Calu3 (cell line): ENCODE measurements at regions of chr12 and their contacts with region 1.

Region 1: DNA sequence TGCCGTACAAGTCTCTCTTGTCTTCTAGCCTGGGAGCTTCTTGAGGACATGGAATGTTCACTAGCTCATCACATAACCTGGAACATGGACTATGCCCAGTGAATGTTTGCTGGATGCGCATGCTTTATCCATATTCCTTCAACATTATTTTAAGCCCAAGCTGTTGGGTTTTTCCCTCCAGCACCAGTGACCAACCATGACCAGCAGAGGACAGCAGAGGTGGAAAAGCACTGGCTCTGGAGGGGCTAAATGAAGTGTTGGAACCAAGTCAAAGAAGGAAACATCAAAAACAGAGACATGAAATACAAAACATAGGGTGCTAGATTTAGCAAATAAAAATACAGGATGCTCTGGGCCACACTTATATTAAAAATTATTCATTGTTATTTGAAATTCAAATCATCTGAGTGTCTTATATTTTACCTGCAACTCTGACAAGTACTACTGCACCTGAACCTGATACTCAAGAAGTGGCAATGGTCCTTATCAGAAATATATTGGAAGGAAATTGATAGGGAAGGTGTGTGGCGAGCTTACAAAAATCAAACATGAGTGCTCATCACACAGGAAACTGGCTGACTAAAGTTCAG is 23.1 kb upstream of the HELB start:
- DNase-seq: peak; percentile 51
- H3K4me3 Mint-ChIP-seq: no peak overlapping the region
- H3K27ac Mint-ChIP-seq: no peak overlapping the region
- H3K4me1 Mint-ChIP-seq: no peaks in the 10 kb centered on the region
- H3K27me3 Mint-ChIP-seq: peaks cover 15% of the 10 kb centered on the region
- CTCF ChIP-seq: peak; percentile 58

Region 2: DNA sequence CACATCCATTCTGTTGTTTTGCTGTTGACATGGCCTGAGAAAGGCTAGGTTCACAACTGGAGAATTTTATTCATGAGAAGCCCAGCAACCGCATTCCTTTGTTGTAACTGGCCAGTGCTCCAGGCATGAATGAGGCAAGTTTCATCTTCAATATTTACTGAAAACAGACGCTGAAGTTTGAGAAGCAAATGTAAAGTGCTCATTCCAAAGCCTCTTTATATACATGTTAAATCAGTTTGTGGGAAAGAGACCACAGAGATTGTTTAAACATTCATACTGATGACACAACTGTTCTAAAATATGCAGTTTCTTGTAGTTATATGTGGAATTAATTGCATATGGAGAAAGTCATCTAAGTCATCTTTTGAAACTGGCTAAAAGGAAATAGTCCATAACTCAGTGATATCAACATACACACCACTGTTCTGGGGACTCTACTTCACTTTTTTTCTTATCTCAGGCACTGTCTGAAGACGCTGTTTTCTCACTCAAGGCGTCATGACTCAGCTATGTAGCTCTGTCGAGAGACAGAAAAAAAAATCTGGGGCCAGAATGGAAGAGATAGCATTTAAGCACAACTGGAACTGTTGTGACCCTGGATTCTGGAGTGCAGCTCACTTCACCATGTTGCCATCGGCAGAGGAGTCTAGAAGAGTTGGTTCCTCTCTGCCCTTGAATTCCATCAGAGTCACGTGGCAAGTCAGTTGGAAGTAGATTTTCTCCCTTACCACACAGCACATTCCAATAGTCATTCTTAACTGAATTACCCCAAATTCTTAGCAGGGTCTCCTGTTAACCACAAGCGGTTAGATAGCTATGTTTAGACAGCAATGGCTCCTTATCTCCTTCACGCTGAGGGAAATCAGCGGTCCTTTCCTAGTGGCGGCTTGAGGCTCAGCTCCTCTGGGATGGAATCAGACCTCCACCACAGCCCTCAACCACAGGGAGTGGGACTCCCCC is 713.3 kb before region 1 on chr12:
- CTCF ChIA-PET with region 1: no interaction called
- intact Hi-C with region 1: no loop called
- DNase-seq: no peak
- H3K4me3 Mint-ChIP-seq: no peak overlapping the region
- H3K27ac Mint-ChIP-seq: no peak overlapping the region
- H3K4me1 Mint-ChIP-seq: peaks cover 27% of the 10 kb centered on the region
- H3K27me3 Mint-ChIP-seq: no peaks in the 10 kb centered on the region
- CTCF ChIP-seq: no peak

Region 3: GRCh38 chr12:66409195-66409871 is 130.1 kb after region 1 on chr12:
- CTCF ChIA-PET with region 1: no interaction called
- intact Hi-C with region 1: loop called (anchors 5 kb)
- DNase-seq: peak; percentile 53
- H3K4me3 Mint-ChIP-seq: no peak overlapping the region
- H3K27ac Mint-ChIP-seq: no peak overlapping the region
- H3K4me1 Mint-ChIP-seq: no peaks in the 10 kb centered on the region
- H3K27me3 Mint-ChIP-seq: no peaks in the 10 kb centered on the region
- CTCF ChIP-seq: peak; percentile 81

Region 4: GRCh38 chr12:66693901-66694675 is 414.9 kb after region 1 on chr12:
- CTCF ChIA-PET with region 1: interaction called, 4 read pairs
- intact Hi-C with region 1: loop called (anchors 2 kb)
- DNase-seq: peak; percentile 43
- H3K4me3 Mint-ChIP-seq: no peak overlapping the region
- H3K27ac Mint-ChIP-seq: no peak overlapping the region
- H3K4me1 Mint-ChIP-seq: peaks cover 9% of the 10 kb centered on the region
- H3K27me3 Mint-ChIP-seq: no peaks in the 10 kb centered on the region
- CTCF ChIP-seq: peak; percentile 72

Region 5: GRCh38 chr12:67077617-67078016 is 798.4 kb after region 1 on chr12:
- CTCF ChIA-PET with region 1: no interaction called
- intact Hi-C with region 1: no loop called
- DNase-seq: no peak
- H3K4me3 Mint-ChIP-seq: no peak overlapping the region
- H3K27ac Mint-ChIP-seq: no peak overlapping the region
- H3K4me1 Mint-ChIP-seq: peaks cover 31% of the 10 kb centered on the region
- H3K27me3 Mint-ChIP-seq: no peaks in the 10 kb centered on the region
- CTCF ChIP-seq: no peak

Region 6: DNA sequence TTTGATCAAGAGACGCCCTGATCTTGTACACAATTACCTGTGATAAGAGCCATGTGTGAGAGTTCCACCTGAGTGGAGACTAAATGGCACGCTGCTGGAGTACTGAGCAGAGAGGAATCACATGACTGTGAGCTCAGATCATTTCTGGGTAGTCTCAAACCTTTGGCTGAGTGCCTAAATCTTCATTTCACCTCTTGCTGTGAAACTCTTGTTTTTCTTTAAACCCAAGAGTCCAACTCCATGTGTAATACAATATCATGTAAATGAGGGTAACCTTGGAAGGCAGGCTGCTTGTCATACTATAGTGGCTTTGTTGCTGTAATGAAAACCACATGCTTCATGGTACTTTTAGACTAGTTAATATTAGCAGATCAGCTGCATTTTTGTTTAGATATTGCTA is 1146.8 kb after region 1 on chr12:
- CTCF ChIA-PET with region 1: no interaction called
- intact Hi-C with region 1: no loop called
- DNase-seq: no peak
- H3K4me3 Mint-ChIP-seq: no peak overlapping the region
- H3K27ac Mint-ChIP-seq: no peak overlapping the region
- H3K4me1 Mint-ChIP-seq: peaks cover 33% of the 10 kb centered on the region
- H3K27me3 Mint-ChIP-seq: no peaks in the 10 kb centered on the region
- CTCF ChIP-seq: no peak